GM18951 (cell line): ENCODE measurements at regions of chr16 and their contacts with region 1.

Region 1: DNA sequence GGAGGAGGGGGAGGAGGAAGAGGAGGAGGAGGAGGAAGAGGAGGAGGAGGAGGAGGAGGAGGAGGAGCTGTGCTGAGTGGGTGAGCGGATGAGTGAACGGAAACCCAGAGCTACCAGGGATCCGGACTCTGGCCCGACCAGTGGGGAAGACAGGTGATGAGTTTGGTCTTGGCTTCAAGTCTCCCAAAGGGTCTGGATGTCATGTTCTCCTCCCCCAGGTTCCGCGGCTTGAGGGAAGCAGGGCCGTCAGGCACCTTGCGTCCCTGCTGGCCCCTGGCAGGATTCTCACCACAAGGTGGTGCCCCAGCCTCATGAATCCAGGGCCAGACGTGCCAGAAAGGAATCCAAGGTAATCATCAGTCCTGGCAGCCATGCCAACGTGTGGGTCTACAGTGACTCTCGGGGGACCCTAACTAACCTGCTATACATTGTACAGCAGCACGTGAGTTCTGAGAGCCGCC is 13.5 kb upstream of the ABAT start:
- POLR2A ChIP-seq: no peak

Region 2: DNA sequence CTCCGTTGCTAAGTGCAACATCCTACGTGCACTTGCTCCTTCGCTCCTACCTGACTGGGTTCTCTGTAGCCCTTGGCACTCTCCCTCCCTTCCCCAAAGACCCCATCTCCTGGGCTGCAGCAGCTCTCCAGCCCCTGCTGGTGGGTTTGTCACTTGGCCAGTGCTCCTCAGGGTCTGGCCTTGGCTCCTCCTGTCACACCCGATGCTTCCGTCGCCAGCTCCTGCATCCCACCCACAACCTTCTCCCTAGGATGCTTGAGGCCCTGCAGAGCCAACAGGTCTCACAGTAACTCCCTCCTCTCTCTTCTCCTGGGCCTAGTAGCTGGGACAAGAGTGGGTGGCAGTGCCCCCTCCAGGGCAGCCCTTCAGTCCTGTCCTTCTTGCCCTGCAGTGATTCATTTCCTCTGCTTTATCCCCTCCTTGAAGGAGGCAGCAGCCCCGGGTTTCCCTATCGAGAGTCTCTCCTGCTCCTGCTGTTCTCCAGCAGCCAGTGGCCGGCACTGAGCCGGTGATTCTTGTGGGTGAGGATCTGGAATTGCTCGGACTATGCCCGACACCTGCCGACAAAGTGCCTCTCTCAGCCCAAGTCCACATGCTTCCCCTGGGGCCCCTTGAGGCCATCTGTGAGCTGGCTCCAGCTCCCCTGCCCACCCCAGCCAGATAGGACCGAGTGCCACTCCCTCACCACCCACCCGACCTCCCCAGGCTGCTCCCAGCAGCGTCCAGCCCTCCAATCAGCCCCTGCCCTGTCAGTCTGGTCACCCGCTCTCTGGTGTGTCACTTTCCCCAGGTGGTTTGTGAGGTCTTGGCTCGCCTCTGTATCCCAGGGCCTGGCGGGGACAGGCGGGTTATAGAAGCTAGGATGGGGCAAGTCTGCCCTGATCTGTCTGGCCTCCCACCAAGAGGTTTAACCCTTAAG is 225.1 kb after region 1 on chr16:
- in situ Hi-C with region 1: loop called (anchors 10 kb)
- POLR2A ChIP-seq: no peak